Natural killer cell (primary cell): ENCODE measurements at regions of chr19 and their contacts with region 1.

Region 1: GRCh38 chr19:19063183-19064097 is at the start of gene SLC25A42:
- DNase-seq: peak; percentile 99
- ATAC-seq: peak; percentile 87 to 96 (median 89)
- H3K4me3 ChIP-seq: peak within 1 kb of the TSS; percentile 78
- H3K4me3 Mint-ChIP-seq: peak within 1 kb of the TSS; percentile 89
- H3K27ac ChIP-seq: peak within 1 kb of the TSS; percentile 81
- H3K27ac Mint-ChIP-seq: peak within 1 kb of the TSS; percentile 77 to 93
- H3K4me1 ChIP-seq: peaks cover 49% of the 10 kb centered on the region
- H3K4me1 Mint-ChIP-seq: peaks cover 14 to 48% of the 10 kb centered on the region in 2 donors
- H3K27me3 ChIP-seq: no peaks in the 10 kb centered on the region
- H3K27me3 Mint-ChIP-seq: no peaks in the 10 kb centered on the region
- CTCF ChIP-seq: no peak
- total RNA-seq, gene SLC25A42: 34.6 to 50.3 (median 41.8) TPM

Region 2: GRCh38 chr19:18919086-18919899 is 144.1 kb before region 1 on chr19 and contains the starts of genes COPE and DDX49:
- intact Hi-C with region 1: loop called (anchors 1 kb)
- DNase-seq: peak; percentile 98 to 100
- ATAC-seq: peak; percentile 90 to 98 (median 92)
- H3K4me3 ChIP-seq: peak within 1 kb of the TSS; percentile 72
- H3K4me3 Mint-ChIP-seq: peak within 1 kb of the TSS; percentile 97
- H3K27ac ChIP-seq: peak within 1 kb of the TSS; percentile 85
- H3K27ac Mint-ChIP-seq: peak within 1 kb of the TSS; percentile 90 to 95
- H3K4me1 ChIP-seq: peaks cover 31% of the 10 kb centered on the region
- H3K4me1 Mint-ChIP-seq: peaks cover 31 to 39% of the 10 kb centered on the region in 2 donors
- H3K27me3 ChIP-seq: no peaks in the 10 kb centered on the region
- H3K27me3 Mint-ChIP-seq: no peaks in the 10 kb centered on the region
- CTCF ChIP-seq: no peak
- total RNA-seq, gene COPE: 204 to 228 (median 218) TPM
- total RNA-seq, gene DDX49: 59.3 to 66.9 (median 62.9) TPM

Region 3: GRCh38 chr19:18999896-19000620 is 63.4 kb before region 1 on chr19:
- intact Hi-C with region 1: no loop called
- DNase-seq: peak in 1 of 2 donors; percentile 15
- ATAC-seq: no peak
- H3K4me3 ChIP-seq: no peak overlapping the region
- H3K4me3 Mint-ChIP-seq: no peak overlapping the region
- H3K27ac ChIP-seq: no peak overlapping the region
- H3K27ac Mint-ChIP-seq: peak overlapping the region; percentile 11 to 74
- H3K4me1 ChIP-seq: peaks cover 21% of the 10 kb centered on the region
- H3K4me1 Mint-ChIP-seq: peaks cover 22 to 23% of the 10 kb centered on the region in 2 donors
- H3K27me3 ChIP-seq: no peaks in the 10 kb centered on the region
- H3K27me3 Mint-ChIP-seq: no peaks in the 10 kb centered on the region
- CTCF ChIP-seq: no peak

Region 4: DNA sequence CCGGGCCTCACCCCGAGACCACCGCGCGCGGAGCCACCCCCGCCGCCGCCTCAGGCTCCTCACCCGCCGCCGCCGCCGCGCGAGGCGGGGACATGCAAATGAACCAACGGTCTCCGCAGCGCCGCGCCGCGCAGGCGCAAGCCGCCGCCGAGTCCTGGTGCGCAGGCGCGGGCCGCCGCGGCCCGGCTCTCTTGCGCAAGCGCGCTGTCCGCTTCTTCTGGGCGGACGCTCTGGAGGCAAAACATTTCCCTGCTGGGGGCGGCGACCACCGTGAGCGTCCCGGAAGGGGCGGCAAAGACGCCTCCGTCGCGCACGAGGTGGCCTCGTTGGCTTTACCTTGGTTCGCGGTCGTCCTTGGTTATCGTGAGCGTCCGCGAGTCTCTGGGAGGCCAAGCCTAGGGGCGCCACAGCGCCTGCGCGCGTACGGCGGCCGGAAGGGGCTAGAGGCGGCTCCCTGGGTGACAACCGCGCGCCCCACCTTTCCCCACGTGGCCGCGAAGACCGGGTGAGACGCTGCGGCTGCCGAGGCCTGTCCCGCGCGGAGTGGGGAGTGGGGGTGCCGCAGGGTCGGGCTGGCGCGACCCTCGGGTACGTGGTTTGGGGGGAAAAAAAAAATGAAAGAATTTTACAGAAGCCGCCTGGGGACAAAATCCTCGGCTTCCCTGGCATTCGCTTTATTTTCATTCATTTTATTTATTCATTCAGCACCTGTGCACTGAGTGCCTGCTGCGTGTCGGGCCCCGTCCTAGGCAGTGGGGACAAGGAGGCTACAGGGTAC is 29.8 kb before region 1 on chr19 and contains the starts of genes ARMC6 and SUGP2:
- intact Hi-C with region 1: loop called (anchors 1 kb)
- DNase-seq: peak; percentile 93 to 96
- ATAC-seq: peak; percentile 74 to 88 (median 81)
- H3K4me3 ChIP-seq: peak within 1 kb of the TSS; percentile 84
- H3K4me3 Mint-ChIP-seq: peak within 1 kb of the TSS; percentile 96
- H3K27ac ChIP-seq: peak within 1 kb of the TSS; percentile 69
- H3K27ac Mint-ChIP-seq: peak within 1 kb of the TSS; percentile 92 to 95
- H3K4me1 ChIP-seq: peaks cover 29% of the 10 kb centered on the region
- H3K4me1 Mint-ChIP-seq: peaks cover 17 to 22% of the 10 kb centered on the region in 2 donors
- H3K27me3 ChIP-seq: no peaks in the 10 kb centered on the region
- H3K27me3 Mint-ChIP-seq: no peaks in the 10 kb centered on the region
- CTCF ChIP-seq: no peak
- total RNA-seq, gene ARMC6: 19.3 to 21.2 (median 21.0) TPM
- total RNA-seq, gene SUGP2: 220 to 237 (median 236) TPM

Region 5: DNA sequence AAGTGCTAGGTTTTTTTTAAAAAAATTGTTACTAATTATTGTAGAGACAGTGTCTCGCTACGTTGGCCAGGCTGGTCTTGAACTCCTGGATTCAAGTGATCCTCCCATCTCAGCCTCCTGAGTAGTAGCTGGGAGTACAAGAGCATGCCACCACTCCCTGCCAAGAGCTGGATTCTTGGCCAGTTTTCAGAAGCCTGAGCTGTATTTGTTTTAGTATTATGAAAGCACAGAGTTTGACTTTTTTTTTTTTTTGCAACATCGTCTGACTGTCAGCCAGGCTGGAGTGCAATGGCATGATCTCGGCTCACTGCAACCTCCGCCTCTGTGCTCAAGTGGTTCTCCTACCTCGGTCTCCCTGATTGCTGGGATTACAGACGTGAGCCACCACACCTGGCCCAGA is 23.0 kb before region 1 on chr19:
- intact Hi-C with region 1: loop called (anchors 1 kb)
- DNase-seq: no peak
- ATAC-seq: no peak
- H3K4me3 ChIP-seq: no peak overlapping the region
- H3K4me3 Mint-ChIP-seq: peak overlapping the region; percentile 76
- H3K27ac ChIP-seq: peak overlapping the region; percentile 86
- H3K27ac Mint-ChIP-seq: peak overlapping the region; percentile 84 to 92
- H3K4me1 ChIP-seq: peaks cover 25% of the 10 kb centered on the region
- H3K4me1 Mint-ChIP-seq: peaks cover 21 to 22% of the 10 kb centered on the region in 2 donors
- H3K27me3 ChIP-seq: no peaks in the 10 kb centered on the region
- H3K27me3 Mint-ChIP-seq: no peaks in the 10 kb centered on the region
- CTCF ChIP-seq: no peak

Region 6: GRCh38 chr19:19138169-19138981 is 74.9 kb after region 1 on chr19 and contains the start of gene TMEM161A:
- intact Hi-C with region 1: loop called (anchors 2 kb)
- DNase-seq: peak; percentile 97 to 98
- ATAC-seq: peak; percentile 99 to 100 (median 99)
- H3K4me3 ChIP-seq: peak within 1 kb of the TSS; percentile 88
- H3K4me3 Mint-ChIP-seq: peak within 1 kb of the TSS; percentile 95
- H3K27ac ChIP-seq: peak within 1 kb of the TSS; percentile 74
- H3K27ac Mint-ChIP-seq: peak within 1 kb of the TSS; percentile 82 to 99
- H3K4me1 ChIP-seq: peaks cover 26% of the 10 kb centered on the region
- H3K4me1 Mint-ChIP-seq: peaks cover 17 to 29% of the 10 kb centered on the region in 2 donors
- H3K27me3 ChIP-seq: no peaks in the 10 kb centered on the region
- H3K27me3 Mint-ChIP-seq: no peaks in the 10 kb centered on the region
- CTCF ChIP-seq: no peak
- total RNA-seq, gene TMEM161A: 13.9 to 16.5 (median 14.2) TPM

Region 7: DNA sequence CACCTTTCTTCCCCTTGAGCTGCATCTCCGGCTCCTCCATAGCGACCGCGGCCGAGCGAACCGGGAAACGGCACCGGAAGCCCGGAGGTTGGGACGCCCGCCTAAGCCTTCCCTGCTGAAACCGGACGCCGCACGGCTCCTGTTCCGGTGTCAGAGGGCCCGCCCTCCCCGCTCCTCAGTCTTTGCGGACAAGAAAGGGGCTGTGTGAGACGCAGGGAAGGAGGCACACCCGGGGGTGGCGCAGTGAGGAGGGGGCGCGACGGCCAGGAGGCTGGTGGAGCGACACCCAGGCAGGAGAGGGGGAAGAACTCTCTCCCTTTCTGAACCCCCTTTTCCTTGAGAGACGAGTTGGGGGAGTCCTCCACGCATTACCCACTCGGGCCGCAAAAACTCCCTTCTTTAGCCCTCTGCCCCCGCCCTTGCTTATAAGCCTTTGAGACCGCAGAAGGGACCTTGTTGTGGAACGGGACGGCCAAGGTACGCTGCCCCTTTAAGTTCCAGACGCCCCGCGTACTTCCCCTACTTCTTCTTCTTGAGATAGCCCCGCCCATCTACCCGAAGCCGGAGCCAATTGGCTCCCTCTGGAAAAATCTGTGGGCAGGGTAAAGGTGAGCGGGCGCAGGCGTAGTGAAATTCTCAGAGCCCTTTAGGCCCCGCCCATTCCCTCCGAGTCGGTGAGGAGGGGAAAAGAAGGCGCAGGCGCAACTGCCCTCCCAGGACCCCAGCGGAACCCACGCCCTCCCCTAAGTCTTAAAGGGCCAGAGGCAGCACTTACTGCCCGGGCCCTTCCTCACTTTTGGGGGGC is 128.8 kb after region 1 on chr19 and contains the starts of genes BORCS8 and RFXANK:
- intact Hi-C with region 1: loop called (anchors 5 kb)
- DNase-seq: peak; percentile 96 to 100
- ATAC-seq: peak; percentile 88 to 97 (median 89)
- H3K4me3 ChIP-seq: peak within 1 kb of the TSS; percentile 73
- H3K4me3 Mint-ChIP-seq: peak within 1 kb of the TSS; percentile 98
- H3K27ac ChIP-seq: peak within 1 kb of the TSS; percentile 94
- H3K27ac Mint-ChIP-seq: peak within 1 kb of the TSS; percentile 96
- H3K4me1 ChIP-seq: peaks cover 39% of the 10 kb centered on the region
- H3K4me1 Mint-ChIP-seq: peaks cover 25 to 49% of the 10 kb centered on the region in 2 donors
- H3K27me3 ChIP-seq: no peaks in the 10 kb centered on the region
- H3K27me3 Mint-ChIP-seq: no peaks in the 10 kb centered on the region
- CTCF ChIP-seq: no peak
- total RNA-seq, gene BORCS8: 28.2 to 42.4 (median 33.2) TPM
- total RNA-seq, gene RFXANK: 50.1 to 67.5 (median 66.0) TPM